ENCODE measurements at regions of chr17 and their contacts with region 1.

Region 1: DNA sequence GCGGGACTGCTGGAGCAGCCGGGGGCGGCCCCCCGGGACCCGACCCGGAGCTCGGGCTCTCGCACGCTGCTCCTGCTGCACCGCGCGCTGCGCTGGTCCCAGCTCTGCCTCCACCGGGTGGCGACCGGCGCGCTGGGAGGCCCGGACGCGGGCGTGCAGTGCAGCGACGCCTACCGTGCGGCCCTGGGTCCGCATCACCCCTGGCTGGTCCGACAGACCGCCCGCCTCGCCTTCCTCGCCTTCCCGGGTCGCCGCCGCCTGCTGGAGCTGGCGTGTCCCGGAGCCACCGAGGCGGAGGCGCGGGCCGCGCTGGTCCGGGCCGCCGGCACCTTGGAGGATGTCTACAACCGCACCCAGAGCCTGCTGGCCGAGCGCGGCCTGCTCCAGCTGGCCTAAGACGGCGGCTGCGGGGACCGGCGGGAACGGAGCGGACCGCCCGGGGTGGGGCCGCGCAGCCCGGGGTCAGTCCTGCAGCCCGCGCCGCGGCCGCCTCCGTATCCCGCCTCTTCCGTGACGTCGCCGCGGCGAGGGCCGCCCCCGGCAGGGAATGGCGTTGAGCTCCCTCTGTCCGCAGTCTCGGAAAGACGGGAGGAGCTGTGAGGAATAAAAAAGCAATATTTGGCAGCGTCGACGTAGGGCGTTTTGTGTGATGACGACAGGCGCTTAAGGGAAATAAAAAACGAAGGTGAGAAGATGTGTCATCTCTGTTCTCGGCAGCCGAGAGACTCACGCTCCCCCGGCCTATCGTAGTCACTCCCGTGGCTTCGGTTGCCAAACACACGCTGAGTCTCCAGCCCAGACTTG is 1.3 kb downstream of the GLTPD2 start:
- DNase-seq: peak; percentile 85
- H3K4me3 Mint-ChIP-seq: peak overlapping the region; percentile 87
- H3K27ac Mint-ChIP-seq: peak overlapping the region; percentile 89
- H3K4me1 Mint-ChIP-seq: peaks cover 34% of the 10 kb centered on the region
- H3K27me3 Mint-ChIP-seq: peaks cover 35% of the 10 kb centered on the region

Region 2: DNA sequence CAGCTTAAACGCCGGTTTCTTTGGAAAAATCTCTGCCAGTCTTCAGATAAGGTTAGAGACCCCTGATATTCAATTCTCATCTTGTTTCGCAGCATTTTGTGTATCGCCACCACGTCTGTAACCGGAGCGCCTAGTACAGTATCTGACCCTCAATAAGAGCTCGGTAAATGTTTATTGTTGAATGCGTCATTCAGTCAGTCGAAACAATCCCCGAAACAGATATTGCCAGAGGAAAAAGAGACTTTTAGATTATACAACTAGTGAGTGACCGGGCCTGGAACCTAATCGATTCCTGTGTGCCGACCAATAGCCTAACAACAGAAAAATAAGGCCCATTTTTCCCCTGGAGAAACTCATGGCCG is 86.8 kb before region 1 on chr17:
- CTCF ChIA-PET with region 1: interaction called, 22 read pairs
- POLR2A ChIA-PET with region 1: interaction called, 21 read pairs
- DNase-seq: no peak
- H3K4me3 Mint-ChIP-seq: peak overlapping the region; percentile 75
- H3K27ac Mint-ChIP-seq: peak overlapping the region; percentile 87
- H3K4me1 Mint-ChIP-seq: peaks cover 61% of the 10 kb centered on the region
- H3K27me3 Mint-ChIP-seq: no peaks in the 10 kb centered on the region

Region 3: GRCh38 chr17:4715063-4715744 is 74.9 kb before region 1 on chr17:
- CTCF ChIA-PET with region 1: interaction called, 22 read pairs
- POLR2A ChIA-PET with region 1: interaction called, 33 read pairs
- DNase-seq: peak; percentile 76
- H3K4me3 Mint-ChIP-seq: peak overlapping the region; percentile 83
- H3K27ac Mint-ChIP-seq: peak overlapping the region; percentile 86
- H3K4me1 Mint-ChIP-seq: peaks cover 67% of the 10 kb centered on the region
- H3K27me3 Mint-ChIP-seq: no peaks in the 10 kb centered on the region

Region 4: GRCh38 chr17:4747847-4748246 is 42.3 kb before region 1 on chr17:
- CTCF ChIA-PET with region 1: interaction called, 13 read pairs
- POLR2A ChIA-PET with region 1: no interaction called
- DNase-seq: peak; percentile 53
- H3K4me3 Mint-ChIP-seq: peak overlapping the region; percentile 63
- H3K27ac Mint-ChIP-seq: peak overlapping the region; percentile 84
- H3K4me1 Mint-ChIP-seq: peaks cover 24% of the 10 kb centered on the region
- H3K27me3 Mint-ChIP-seq: peaks cover 25% of the 10 kb centered on the region

Region 5: GRCh38 chr17:4806777-4807604 is 16.9 kb after region 1 on chr17 and contains the start of gene PLD2:
- CTCF ChIA-PET with region 1: interaction called, 17 read pairs
- POLR2A ChIA-PET with region 1: interaction called, 19 read pairs
- DNase-seq: peak; percentile 88
- H3K4me3 Mint-ChIP-seq: peak within 1 kb of the TSS; percentile 74
- H3K27ac Mint-ChIP-seq: no peak within 1 kb of the TSS
- H3K4me1 Mint-ChIP-seq: peaks cover 23% of the 10 kb centered on the region
- H3K27me3 Mint-ChIP-seq: no peaks in the 10 kb centered on the region
- total RNA-seq, gene PLD2: 17.4 to 20.7 TPM

Measured in activated CD4-positive, alpha-beta memory T cell treated with anti-CD3 and anti-CD28 coated beads, Interleukin-2, amount 10 ng/mL, durations not matched to agents 7 days and 5 days (primary cell).